B cell (primary cell): ENCODE measurements at regions of chr17 and their contacts with region 1.

Region 1: DNA sequence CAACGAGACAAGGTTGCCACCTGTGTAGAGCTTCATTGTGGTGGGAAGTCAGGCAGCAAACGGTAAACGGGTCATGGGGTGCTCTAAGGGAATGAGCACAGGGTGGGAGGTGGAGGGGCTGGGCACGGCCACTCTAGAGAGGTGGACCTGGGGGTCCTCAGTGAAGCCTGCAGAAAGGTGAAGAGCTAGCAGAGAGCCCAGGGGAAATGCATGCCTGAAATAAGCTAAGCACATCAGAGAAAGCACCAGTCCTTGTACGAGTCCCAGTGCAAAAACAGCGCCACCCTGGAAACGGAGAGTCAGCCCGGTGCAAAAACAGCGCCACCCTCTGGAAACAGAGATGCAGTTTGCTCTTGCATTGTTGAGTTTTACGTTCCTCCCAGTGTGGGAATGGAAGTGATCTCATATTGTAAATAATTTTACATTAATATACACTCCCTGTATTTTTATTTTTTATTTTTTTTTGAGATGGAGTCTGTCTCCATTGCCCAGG is 65.0 kb downstream of the TBC1D16 start:
- DNase-seq: peak; percentile 77
- ATAC-seq: peak; percentile 45
- H3K4me3 ChIP-seq: no peak overlapping the region
- H3K4me3 Mint-ChIP-seq: no peak overlapping the region
- H3K27ac ChIP-seq: no peak overlapping the region
- H3K27ac Mint-ChIP-seq: peak overlapping the region; percentile 26
- H3K4me1 ChIP-seq: peaks cover 22 to 24% of the 10 kb centered on the region in 2 donors
- H3K4me1 Mint-ChIP-seq: peaks cover 30% of the 10 kb centered on the region
- H3K27me3 ChIP-seq: no peaks in the 10 kb centered on the region
- H3K27me3 Mint-ChIP-seq: no peaks in the 10 kb centered on the region
- CTCF ChIP-seq: peak; percentile 64

Region 2: DNA sequence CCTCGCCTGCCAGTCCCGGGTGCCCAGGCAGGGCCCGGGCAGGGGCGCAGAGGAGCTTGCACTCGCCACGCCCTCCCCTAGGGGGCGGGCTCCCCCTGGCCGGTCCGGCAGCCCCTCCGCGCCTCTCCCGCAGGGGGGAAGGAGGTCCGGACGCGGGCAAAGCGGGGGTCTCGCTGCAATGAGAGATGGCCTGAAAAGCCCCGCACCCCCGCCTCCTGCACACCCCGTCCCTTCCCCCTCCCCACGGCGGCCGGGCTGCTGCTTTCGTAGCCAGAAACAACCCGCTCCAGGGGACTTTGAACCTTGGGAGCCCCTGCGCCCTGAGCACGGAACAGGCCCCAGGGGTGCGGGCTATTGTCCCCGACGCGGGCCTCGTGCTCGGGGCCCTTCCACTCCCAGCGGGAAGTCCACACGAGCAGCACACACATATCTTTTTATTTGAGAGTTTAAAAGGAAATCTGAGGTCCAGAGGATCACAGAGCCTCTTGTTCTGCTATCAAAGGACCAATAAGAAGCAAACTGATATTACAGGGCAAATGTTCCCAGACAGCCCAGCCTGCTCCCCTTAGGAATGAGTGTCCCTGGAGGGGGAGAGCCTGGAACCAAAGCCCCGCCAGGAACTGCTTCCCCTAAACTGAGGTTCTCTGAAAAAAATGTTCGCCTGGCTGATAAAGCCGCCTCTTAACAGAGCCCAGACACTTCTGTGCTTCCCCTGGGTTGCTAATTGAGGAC is 125.6 kb before region 1 on chr17:
- CTCF ChIA-PET with region 1: interaction called, 19 read pairs
- POLR2A ChIA-PET with region 1: no interaction called
- intact Hi-C with region 1: loop called (anchors 1 kb)
- DNase-seq: peak; percentile 75
- ATAC-seq: peak; percentile 74
- H3K4me3 ChIP-seq: peak overlapping the region in 1 of 5 experiments; percentile 8
- H3K4me3 Mint-ChIP-seq: peak overlapping the region; percentile 52
- H3K27ac ChIP-seq: no peak overlapping the region
- H3K27ac Mint-ChIP-seq: no peak overlapping the region
- H3K4me1 ChIP-seq: peaks cover 53 to 56% of the 10 kb centered on the region in 2 donors
- H3K4me1 Mint-ChIP-seq: peaks cover 35% of the 10 kb centered on the region
- H3K27me3 ChIP-seq: peaks cover 0 to 83% (median 43%) of the 10 kb centered on the region in 4 experiments
- H3K27me3 Mint-ChIP-seq: peaks cover 37% of the 10 kb centered on the region
- CTCF ChIP-seq: peak; percentile 90

Region 3: DNA sequence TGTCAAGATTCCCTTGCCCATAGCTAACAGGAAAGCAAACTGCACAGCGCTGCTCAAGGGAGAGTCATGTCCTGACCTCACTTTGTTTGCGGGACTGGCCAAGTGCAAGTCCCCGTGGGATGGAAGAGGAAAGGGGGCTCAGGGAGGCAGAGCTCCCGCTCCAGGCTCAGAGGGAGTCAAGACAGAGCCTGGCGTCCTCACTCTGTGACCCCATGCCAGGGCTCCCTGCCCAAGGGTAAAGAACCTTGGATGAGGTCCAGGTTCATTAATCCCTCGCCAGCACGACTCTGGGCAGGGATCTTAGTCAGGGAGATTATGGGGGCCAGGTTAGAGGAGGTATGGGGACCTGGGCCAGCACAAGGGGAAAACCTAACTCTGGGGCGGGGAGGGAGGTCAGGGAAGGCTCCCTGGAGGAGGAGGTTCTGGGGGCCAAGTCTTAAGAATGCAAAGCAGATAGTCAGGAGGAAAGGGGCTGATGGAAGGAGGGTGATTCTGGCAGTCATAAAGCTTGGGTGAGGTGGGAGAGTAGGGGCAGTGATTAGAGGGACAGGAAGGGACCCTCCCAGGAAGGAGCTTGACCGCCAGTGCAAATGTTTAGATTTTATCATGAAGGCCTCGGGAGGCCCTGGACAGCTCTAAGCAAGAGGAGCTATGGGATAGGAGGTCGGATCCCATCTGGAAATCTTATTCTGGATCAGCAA is 79.8 kb before region 1 on chr17:
- CTCF ChIA-PET with region 1: no interaction called
- POLR2A ChIA-PET with region 1: no interaction called
- intact Hi-C with region 1: no loop called
- DNase-seq: no peak
- ATAC-seq: no peak
- H3K4me3 ChIP-seq: no peak overlapping the region
- H3K4me3 Mint-ChIP-seq: no peak overlapping the region
- H3K27ac ChIP-seq: no peak overlapping the region
- H3K27ac Mint-ChIP-seq: no peak overlapping the region
- H3K4me1 ChIP-seq: no peaks in the 10 kb centered on the region
- H3K4me1 Mint-ChIP-seq: no peaks in the 10 kb centered on the region
- H3K27me3 ChIP-seq: peaks cover 0 to 30% (median 0%) of the 10 kb centered on the region in 4 experiments
- H3K27me3 Mint-ChIP-seq: peaks cover 50% of the 10 kb centered on the region
- CTCF ChIP-seq: no peak

Region 4: DNA sequence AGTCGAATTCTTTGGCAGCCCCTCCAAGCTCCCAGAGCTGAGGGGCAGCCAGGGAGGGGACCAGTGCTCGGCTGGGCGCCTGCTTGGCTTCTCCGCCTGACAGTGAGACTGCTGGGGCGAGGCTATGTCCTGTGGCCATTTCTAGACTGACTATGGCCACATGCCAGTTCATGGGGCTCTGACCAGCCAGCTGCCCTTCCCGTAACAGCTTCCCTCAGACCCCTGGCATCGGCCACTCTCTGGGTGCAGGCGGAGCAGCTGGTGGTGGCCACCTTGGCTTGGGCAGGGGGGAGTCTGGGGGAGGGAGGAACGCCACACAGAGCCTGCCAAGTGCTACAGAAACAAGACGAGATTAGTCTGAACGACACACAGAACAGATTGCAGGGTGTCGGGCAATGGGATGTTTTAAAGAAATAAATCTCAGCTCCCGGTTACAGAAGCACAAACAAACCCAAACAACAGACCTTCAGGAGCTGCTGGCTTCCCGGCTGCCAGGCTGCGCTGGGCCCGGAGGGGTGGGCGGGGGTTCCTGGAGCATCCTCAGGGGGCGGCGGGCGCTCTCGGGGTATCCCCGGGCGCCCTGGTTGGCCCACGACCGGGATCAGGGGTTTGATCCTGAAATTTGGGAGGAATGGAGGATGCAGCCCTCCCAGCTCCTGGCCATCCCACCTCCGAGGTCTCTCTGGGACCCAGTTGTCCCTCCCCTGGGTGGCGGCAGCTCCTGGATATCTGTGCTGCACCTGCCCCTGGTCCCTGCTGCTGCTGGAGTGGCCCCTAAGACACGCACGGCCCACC is 30.6 kb after region 1 on chr17:
- CTCF ChIA-PET with region 1: no interaction called
- POLR2A ChIA-PET with region 1: no interaction called
- intact Hi-C with region 1: no loop called
- DNase-seq: no peak
- ATAC-seq: no peak
- H3K4me3 ChIP-seq: no peak overlapping the region
- H3K4me3 Mint-ChIP-seq: no peak overlapping the region
- H3K27ac ChIP-seq: no peak overlapping the region
- H3K27ac Mint-ChIP-seq: no peak overlapping the region
- H3K4me1 ChIP-seq: peaks cover 19 to 25% of the 10 kb centered on the region in 2 donors
- H3K4me1 Mint-ChIP-seq: peaks cover 23% of the 10 kb centered on the region
- H3K27me3 ChIP-seq: no peaks in the 10 kb centered on the region
- H3K27me3 Mint-ChIP-seq: no peaks in the 10 kb centered on the region
- CTCF ChIP-seq: no peak